ENCODE measurements at regions of chr7 and their contacts with region 1.

Region 1: DNA sequence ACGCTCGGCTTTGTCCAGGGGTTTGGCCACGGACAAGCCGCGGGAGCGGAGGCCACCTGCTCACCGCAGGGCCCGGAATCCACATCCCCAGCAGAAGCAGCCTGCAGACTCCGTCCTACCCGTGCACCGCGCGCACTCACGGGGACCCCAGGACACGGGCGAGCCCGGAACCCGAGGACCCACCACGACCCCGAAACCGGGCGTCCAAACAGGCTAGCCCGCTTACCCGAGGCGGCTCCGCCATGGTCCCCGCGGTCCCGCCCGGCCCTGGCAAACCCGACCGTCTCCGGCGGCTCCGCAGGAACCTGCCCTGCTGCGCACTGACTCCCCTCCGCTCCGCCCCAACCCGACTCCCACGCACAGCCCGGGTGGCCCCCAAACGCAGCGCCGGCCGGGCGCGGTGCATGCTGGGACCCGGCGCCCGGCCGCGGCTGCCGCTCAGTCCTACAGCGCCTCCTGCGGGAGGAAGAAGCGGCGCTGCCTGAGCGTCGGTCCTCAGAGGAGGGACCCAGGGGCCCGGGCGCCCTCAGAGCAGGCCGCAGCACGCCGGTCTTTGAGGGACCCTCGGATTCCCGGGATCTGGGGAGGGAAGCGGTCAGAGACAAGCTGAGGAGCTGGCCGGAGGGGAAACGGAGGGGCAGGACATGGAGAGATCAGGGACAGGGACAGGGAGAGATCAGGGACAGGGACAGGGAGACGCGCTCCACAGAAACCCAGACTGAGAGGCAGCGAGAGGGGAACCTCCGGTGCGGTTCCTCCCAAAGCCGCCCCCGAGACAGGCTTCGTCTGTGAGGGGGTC is at the start of gene ZNF786:
- DNase-seq: peak; percentile 88
- H3K4me3 ChIP-seq: peak within 1 kb of the TSS; percentile 83
- H3K27ac ChIP-seq: peak within 1 kb of the TSS; percentile 98
- H3K4me1 ChIP-seq: peaks cover 29% of the 10 kb centered on the region
- H3K27me3 ChIP-seq: no peaks in the 10 kb centered on the region
- CTCF ChIP-seq: peak; percentile 96
- total RNA-seq, gene ZNF786: 2.4 TPM

Region 2: DNA sequence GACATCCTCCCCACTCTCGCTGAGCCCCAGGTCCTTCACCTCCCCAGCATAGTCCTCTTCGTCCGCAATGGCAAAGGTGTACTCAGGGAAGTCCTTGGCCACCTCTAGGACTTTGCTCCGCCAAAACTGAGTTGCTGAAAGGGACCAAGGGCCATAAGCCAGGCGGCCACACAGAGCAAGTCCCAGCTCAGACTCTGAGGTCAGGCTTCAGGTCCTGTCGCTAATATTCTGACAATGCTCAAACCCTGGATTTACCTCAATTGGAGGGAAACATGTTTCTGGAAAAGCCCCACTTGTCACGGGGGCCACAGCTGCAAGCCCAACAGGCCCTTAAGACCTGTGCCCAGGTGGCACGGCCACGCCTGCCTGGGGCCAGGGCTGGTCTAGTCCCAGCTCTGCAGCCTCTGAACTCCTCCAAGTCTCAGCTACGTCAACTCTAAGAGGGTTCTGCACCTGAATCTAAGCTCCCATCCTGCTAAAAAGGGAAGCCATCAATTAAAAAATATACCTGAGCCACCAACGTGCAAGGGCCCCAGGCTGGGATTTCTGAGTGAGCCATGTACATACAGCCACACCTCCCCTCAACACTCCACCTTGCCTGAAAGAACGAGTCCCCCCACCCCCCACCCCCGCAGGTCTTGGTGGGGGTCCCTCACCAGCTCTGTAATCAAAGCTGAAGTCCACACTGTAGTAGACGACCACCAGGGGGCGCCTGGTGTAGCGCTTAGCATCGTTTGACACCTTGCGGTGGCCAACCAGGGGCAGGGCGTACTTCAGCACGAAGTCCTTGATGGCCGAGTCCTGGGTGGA is 85.2 kb before region 1 on chr7:
- intact Hi-C with region 1: loop called (anchors 10 kb)
- DNase-seq: peak; percentile 86
- H3K4me3 ChIP-seq: no peak overlapping the region
- H3K27ac ChIP-seq: no peak overlapping the region
- H3K4me1 ChIP-seq: no peaks in the 10 kb centered on the region
- H3K27me3 ChIP-seq: no peaks in the 10 kb centered on the region
- CTCF ChIP-seq: peak; percentile 90